A673 (cell line): ENCODE measurements at regions of chr6 and their contacts with region 1.

Region 1: DNA sequence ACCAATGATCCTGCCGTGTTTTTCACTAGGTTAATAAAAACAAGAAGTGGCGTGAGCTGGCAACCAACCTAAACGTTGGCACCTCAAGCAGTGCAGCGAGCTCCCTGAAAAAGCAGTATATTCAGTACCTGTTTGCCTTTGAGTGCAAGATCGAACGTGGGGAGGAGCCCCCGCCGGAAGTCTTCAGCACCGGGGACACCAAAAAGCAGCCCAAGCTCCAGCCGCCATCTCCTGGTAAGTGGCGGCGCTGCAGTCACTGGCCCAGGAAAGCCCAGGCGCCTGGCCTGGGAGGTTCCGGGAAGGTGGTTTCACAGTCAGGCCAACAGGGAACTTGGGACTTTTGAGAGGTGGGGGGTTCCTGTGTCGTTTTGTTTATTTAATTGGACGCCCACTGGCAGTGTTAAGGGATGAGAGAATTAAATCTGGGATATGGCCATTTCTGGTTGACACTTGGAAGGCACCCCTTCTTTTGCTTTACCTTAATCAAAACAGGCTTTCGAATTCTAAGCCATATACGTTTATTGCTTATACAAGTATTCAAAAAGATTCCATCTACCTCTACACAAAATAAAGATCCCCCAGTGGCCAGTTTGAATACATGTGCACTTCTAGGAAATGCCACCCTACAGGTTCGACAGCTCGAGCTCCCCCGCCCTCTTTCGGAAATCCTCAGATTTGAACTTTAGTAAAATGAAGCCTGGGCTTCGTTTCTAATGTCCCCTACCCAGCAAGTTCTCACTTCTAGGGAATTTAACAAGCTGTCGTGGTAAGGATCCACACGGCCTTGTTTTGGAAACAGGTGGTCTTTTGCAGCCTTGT is 138.9 kb downstream of the TMEM242 start:
- DNase-seq: peak; percentile 73
- H3K4me3 ChIP-seq: no peak overlapping the region
- H3K27ac ChIP-seq: no peak overlapping the region
- H3K4me1 ChIP-seq: no peaks in the 10 kb centered on the region
- H3K27me3 ChIP-seq: no peaks in the 10 kb centered on the region
- CTCF ChIP-seq: peak; percentile 96

Region 2: GRCh38 chr6:156564127-156564806 is 620.1 kb before region 1 on chr6:
- CTCF ChIA-PET with region 1: no interaction called
- POLR2A ChIA-PET with region 1: no interaction called
- intact Hi-C with region 1: loop called (anchors 5 kb)
- DNase-seq: peak; percentile 70
- H3K4me3 ChIP-seq: no peak overlapping the region
- H3K27ac ChIP-seq: no peak overlapping the region
- H3K4me1 ChIP-seq: no peaks in the 10 kb centered on the region
- H3K27me3 ChIP-seq: no peaks in the 10 kb centered on the region
- CTCF ChIP-seq: peak; percentile 99

Region 3: DNA sequence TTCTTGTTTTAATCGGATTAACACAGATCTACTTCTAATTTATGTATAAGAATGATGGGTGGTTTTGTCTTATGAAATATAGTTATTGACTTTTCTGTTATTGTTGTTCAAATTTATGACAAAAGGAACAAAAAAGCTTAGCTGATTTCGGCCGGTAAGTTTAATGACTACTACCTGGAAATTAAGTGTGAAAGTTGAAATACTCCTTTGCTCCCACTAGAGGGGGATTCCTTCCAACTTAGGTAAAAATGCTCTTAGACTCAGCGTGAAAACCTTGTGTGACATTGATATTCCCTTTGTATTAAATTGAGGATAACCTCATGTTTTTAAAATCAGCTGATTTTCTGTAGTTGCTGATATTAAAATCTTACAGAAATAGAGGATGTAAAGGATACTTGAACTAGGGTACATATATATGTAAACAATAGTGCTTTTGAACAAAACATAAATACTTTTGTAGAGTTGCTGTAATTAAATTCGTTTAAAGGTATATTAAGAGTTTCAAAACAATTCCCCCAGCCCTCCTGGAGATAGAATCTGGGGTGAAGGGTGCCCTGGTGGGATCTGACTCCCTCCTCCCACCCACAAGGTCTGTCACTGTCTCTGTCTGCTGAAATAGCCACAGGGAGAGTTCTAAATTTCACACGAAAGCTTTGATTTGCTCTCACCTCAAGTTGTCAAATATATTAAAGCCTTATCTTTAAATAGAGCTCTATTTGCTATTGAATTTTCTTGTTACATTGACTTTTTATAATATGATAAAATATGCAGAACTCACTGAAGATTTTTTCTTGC is 149.8 kb before region 1 on chr6:
- CTCF ChIA-PET with region 1: no interaction called
- POLR2A ChIA-PET with region 1: no interaction called
- intact Hi-C with region 1: loop called (anchors 1 kb)
- DNase-seq: peak; percentile 74
- H3K4me3 ChIP-seq: no peak overlapping the region
- H3K27ac ChIP-seq: no peak overlapping the region
- H3K4me1 ChIP-seq: peaks cover 34% of the 10 kb centered on the region
- H3K27me3 ChIP-seq: no peaks in the 10 kb centered on the region
- CTCF ChIP-seq: peak; percentile 71

Region 4: GRCh38 chr6:157264701-157265100 is 80.3 kb after region 1 on chr6:
- CTCF ChIA-PET with region 1: no interaction called
- POLR2A ChIA-PET with region 1: no interaction called
- intact Hi-C with region 1: no loop called
- DNase-seq: no peak
- H3K4me3 ChIP-seq: no peak overlapping the region
- H3K27ac ChIP-seq: no peak overlapping the region
- H3K4me1 ChIP-seq: no peaks in the 10 kb centered on the region
- H3K27me3 ChIP-seq: no peaks in the 10 kb centered on the region
- CTCF ChIP-seq: no peak